G401 (cell line): ENCODE measurements at regions of chr12 and their contacts with region 1.

Region 1: GRCh38 chr12:49716553-49716952 is 9.3 kb upstream of the FMNL3 start:
- DNase-seq: no peak

Region 2: GRCh38 chr12:49623142-49623904 is 93.2 kb before region 1 on chr12 and contains the start of gene PRPF40B:
- in situ Hi-C with region 1: loop called (anchors 10 kb)
- DNase-seq: peak; percentile 82
- total RNA-seq, gene PRPF40B: 11.2 and 16.4 TPM in 2 replicates

Region 3: GRCh38 chr12:49635036-49635435 is 81.5 kb before region 1 on chr12:
- in situ Hi-C with region 1: no loop called
- DNase-seq: no peak